CD4-positive, alpha-beta memory T cell (primary cell): ENCODE measurements at regions of chr1 and their contacts with region 1.

Region 1: DNA sequence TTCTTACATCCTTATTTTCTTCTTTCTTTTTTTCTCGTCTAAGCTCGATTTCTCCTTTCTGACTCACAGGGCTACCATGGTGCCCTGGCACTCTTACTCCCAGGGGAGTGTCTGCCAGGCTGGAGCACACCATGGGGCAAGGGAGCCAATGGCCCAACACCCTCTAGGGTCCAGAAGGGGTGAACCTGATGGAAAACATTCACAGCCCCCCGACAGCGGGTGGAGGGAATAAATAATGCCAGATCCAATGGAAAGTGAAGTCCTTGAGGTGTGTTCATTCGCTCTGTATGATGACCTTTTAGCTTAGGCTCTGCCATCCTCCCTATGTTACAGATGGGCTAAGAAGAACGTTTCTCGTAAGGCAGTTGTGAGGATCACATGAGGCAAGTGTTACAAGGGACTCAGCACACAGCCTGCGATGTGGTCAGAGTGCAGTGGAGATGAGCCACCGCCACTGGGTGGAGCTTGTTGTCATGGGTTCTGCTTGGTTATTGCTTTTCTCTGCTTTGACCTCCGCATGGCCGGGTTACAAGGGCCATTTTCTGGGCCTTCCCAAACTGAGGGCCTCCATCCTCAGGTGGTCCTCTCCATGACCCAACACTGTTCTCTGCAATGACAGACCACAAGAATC is 3.5 kb upstream of the FCMR start:
- DNase-seq: peak; percentile 42 to 61 (median 55)
- H3K4me3 ChIP-seq: no peak overlapping the region
- H3K4me3 Mint-ChIP-seq: no peak overlapping the region
- H3K27ac ChIP-seq: no peak overlapping the region
- H3K27ac Mint-ChIP-seq: no peak overlapping the region
- H3K4me1 ChIP-seq: peaks cover 56% of the 10 kb centered on the region
- H3K4me1 Mint-ChIP-seq: peaks cover 13 to 27% (median 25%) of the 10 kb centered on the region in 4 donors
- H3K27me3 ChIP-seq: no peaks in the 10 kb centered on the region
- H3K27me3 Mint-ChIP-seq: no peaks in the 10 kb centered on the region

Region 2: GRCh38 chr1:206556750-206557635 is 368.2 kb before region 1 on chr1:
- CTCF ChIA-PET with region 1: no interaction called
- POLR2A ChIA-PET with region 1: interaction called, 10 read pairs
- intact Hi-C with region 1: no loop called
- DNase-seq: peak; percentile 87 to 93 (median 90)
- H3K4me3 ChIP-seq: peak overlapping the region; percentile 95 to 96
- H3K4me3 Mint-ChIP-seq: peak overlapping the region; percentile 90 to 99 (median 98)
- H3K27ac ChIP-seq: peak overlapping the region; percentile 77
- H3K27ac Mint-ChIP-seq: peak overlapping the region; percentile 93 to 98 (median 96)
- H3K4me1 ChIP-seq: peaks cover 76% of the 10 kb centered on the region
- H3K4me1 Mint-ChIP-seq: peaks cover 49 to 93% (median 63%) of the 10 kb centered on the region in 4 donors
- H3K27me3 ChIP-seq: no peaks in the 10 kb centered on the region
- H3K27me3 Mint-ChIP-seq: no peaks in the 10 kb centered on the region

Region 3: GRCh38 chr1:206784471-206784903 is 140.7 kb before region 1 on chr1:
- CTCF ChIA-PET with region 1: no interaction called
- POLR2A ChIA-PET with region 1: interaction called, 10 read pairs
- intact Hi-C with region 1: no loop called
- DNase-seq: peak; percentile 60 to 83 (median 63)
- H3K4me3 ChIP-seq: peak overlapping the region in 1 of 2 donors; percentile 16
- H3K4me3 Mint-ChIP-seq: peak overlapping the region; percentile 55 to 84 (median 70)
- H3K27ac ChIP-seq: peak overlapping the region; percentile 46
- H3K27ac Mint-ChIP-seq: peak overlapping the region; percentile 83 to 96 (median 93)
- H3K4me1 ChIP-seq: peaks cover 37% of the 10 kb centered on the region
- H3K4me1 Mint-ChIP-seq: peaks cover 37 to 60% (median 49%) of the 10 kb centered on the region in 4 donors
- H3K27me3 ChIP-seq: no peaks in the 10 kb centered on the region
- H3K27me3 Mint-ChIP-seq: no peaks in the 10 kb centered on the region

Region 4: GRCh38 chr1:206816390-206817287 is 108.6 kb before region 1 on chr1:
- CTCF ChIA-PET with region 1: interaction called, 92 read pairs
- POLR2A ChIA-PET with region 1: interaction called, 12 read pairs
- intact Hi-C with region 1: no loop called
- DNase-seq: peak; percentile 53 to 75 (median 68)
- H3K4me3 ChIP-seq: no peak overlapping the region
- H3K4me3 Mint-ChIP-seq: peak overlapping the region; percentile 7 to 67 (median 55)
- H3K27ac ChIP-seq: peak overlapping the region; percentile 40
- H3K27ac Mint-ChIP-seq: peak overlapping the region; percentile 74 to 92 (median 88)
- H3K4me1 ChIP-seq: peaks cover 19% of the 10 kb centered on the region
- H3K4me1 Mint-ChIP-seq: peaks cover 17 to 19% (median 19%) of the 10 kb centered on the region in 4 donors
- H3K27me3 ChIP-seq: no peaks in the 10 kb centered on the region
- H3K27me3 Mint-ChIP-seq: no peaks in the 10 kb centered on the region

Region 5: DNA sequence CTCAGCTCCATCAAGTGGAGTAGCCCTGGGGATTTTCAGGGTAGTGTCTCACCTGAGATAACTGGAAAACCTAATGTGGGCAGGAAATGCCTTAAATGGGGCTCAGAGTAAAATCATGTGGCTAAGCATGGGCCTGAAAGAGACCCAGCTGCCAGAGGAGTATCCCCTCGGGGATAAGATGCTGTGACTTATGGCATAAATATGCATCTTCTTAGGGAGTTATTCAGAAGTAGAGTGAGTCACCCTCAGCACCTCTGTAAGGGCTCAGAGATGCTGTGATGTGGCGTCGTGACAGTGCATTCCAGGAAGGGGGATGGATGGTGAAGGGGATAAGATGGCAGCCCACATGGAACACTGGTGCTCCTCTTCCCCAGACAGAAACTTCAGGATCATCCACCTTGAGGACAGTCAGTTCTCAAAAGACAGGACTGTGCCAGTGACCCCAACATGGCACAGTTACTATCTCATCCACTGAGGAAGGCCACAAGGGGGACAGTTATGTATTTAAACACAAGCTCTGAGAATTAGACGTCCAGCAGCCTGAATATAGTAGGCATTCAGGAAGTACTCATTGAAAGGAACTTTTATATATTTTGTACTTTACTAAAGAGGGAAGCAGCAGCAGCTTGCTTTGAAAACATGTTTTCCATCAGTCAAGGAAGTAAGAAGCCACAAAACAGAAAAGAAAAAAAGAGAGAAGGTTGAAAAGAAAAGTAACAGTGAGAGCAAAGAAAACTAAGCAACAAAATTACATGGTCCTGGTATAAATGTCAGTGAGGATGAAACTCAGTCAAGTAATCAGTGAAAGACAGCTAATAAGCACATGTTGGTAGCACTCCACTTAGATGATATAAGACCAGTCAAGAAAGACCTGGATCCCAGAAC is 19.7 kb before region 1 on chr1:
- CTCF ChIA-PET with region 1: interaction called, 66 read pairs
- POLR2A ChIA-PET with region 1: interaction called, 211 read pairs
- intact Hi-C with region 1: no loop called
- DNase-seq: no peak
- H3K4me3 ChIP-seq: no peak overlapping the region
- H3K4me3 Mint-ChIP-seq: peak overlapping the region; percentile 49 to 80 (median 69)
- H3K27ac ChIP-seq: peak overlapping the region; percentile 31
- H3K27ac Mint-ChIP-seq: peak overlapping the region; percentile 67 to 95 (median 85)
- H3K4me1 ChIP-seq: peaks cover 60% of the 10 kb centered on the region
- H3K4me1 Mint-ChIP-seq: peaks cover 45 to 78% (median 60%) of the 10 kb centered on the region in 4 donors
- H3K27me3 ChIP-seq: no peaks in the 10 kb centered on the region
- H3K27me3 Mint-ChIP-seq: no peaks in the 10 kb centered on the region

Region 6: GRCh38 chr1:207004981-207005830 is 80.0 kb after region 1 on chr1:
- CTCF ChIA-PET with region 1: no interaction called
- POLR2A ChIA-PET with region 1: no interaction called
- intact Hi-C with region 1: no loop called
- DNase-seq: peak in 4 of 5 donors; percentile 13 to 26 (median 18)
- H3K4me3 ChIP-seq: no peak overlapping the region
- H3K4me3 Mint-ChIP-seq: no peak overlapping the region
- H3K27ac ChIP-seq: no peak overlapping the region
- H3K27ac Mint-ChIP-seq: peak overlapping the region in 2 of 7 donors; percentile 16 to 41
- H3K4me1 ChIP-seq: no peaks in the 10 kb centered on the region
- H3K4me1 Mint-ChIP-seq: peaks cover 0 to 4% (median 2%) of the 10 kb centered on the region in 4 donors
- H3K27me3 ChIP-seq: no peaks in the 10 kb centered on the region
- H3K27me3 Mint-ChIP-seq: peaks cover 14 to 15% of the 10 kb centered on the region in 2 donors

Region 7: DNA sequence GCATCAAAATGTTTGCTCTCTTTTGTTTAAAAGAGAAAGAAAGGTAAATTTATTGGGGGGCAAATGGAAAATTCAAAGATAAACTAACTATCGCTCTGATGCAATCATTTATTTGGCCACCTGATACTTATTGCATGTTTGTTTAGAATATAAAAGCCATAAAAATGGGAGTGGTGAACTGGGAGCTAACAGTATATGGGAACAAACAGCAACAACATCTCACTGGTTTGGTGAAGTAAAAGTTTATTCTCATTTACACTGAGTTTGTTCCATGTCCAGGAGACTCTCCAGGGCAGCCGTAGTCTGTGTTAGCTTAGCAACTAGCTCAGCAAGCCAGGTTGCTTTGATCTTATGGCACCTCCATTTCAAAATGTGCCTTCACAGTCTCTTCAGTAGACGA is 199.2 kb after region 1 on chr1:
- CTCF ChIA-PET with region 1: no interaction called
- POLR2A ChIA-PET with region 1: no interaction called
- intact Hi-C with region 1: no loop called
- DNase-seq: no peak
- H3K4me3 ChIP-seq: no peak overlapping the region
- H3K4me3 Mint-ChIP-seq: no peak overlapping the region
- H3K27ac ChIP-seq: no peak overlapping the region
- H3K27ac Mint-ChIP-seq: no peak overlapping the region
- H3K4me1 ChIP-seq: no peaks in the 10 kb centered on the region
- H3K4me1 Mint-ChIP-seq: no peaks in the 10 kb centered on the region
- H3K27me3 ChIP-seq: no peaks in the 10 kb centered on the region
- H3K27me3 Mint-ChIP-seq: peaks cover 13 to 14% of the 10 kb centered on the region in 2 donors